ENCODE measurements at regions of chr3 and their contacts with region 1.

Region 1: GRCh38 chr3:41716471-41716870 is 245.4 kb downstream of the ULK4 start:
- DNase-seq: no peak
- H3K4me3 ChIP-seq: no peak overlapping the region
- CTCF ChIP-seq: peak; percentile 50

Region 2: GRCh38 chr3:41698898-41699297 is 17.6 kb before region 1 on chr3:
- CTCF ChIA-PET with region 1: interaction called, 12 read pairs
- POLR2A ChIA-PET with region 1: no interaction called
- DNase-seq: no peak
- H3K4me3 ChIP-seq: no peak overlapping the region
- CTCF ChIP-seq: no peak